ENCODE measurements at regions of chr10 and their contacts with region 1.

Region 1: DNA sequence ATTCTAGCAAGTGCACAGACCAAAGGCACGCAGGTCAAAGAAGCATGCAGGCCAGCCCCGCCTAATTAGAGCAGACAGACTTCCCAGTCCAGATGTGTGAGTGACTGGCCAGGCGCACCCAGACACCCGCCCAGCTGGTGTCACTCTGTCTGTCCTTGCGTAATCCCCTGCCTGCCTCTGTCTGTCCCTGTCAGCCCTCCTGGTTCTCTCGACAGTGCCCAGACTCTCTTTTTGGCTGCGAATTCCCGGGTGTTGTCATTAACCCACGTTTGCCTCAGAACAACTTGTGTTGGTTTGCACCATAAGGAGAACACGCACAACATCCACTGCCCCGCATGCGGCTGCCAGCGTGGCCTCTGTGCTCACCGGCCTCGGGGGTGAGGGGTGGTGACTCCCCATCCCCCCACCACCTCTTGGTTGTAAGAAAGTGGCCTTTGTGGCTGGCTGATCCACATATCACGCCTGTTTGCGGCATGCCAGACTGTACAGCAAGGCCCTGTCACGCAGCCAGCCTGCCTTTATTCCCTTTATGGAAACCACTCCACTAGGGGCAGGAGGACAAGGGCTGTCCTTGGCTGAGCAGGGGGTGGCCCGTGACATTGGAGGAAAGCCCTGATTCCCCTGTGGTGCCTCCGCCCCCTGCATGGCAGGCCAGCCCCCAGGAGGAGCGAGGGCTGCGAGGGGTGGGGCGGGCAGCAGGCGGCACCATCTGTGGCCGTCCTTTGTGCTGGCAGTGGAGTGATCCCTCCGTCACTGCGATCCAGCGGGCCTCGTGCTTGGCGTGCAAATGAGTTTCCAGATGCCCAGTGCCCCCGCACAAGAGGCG is 72.8 kb upstream of the PPIF start:
- DNase-seq: peak; percentile 89
- ATAC-seq: peak; percentile 83

Region 2: DNA sequence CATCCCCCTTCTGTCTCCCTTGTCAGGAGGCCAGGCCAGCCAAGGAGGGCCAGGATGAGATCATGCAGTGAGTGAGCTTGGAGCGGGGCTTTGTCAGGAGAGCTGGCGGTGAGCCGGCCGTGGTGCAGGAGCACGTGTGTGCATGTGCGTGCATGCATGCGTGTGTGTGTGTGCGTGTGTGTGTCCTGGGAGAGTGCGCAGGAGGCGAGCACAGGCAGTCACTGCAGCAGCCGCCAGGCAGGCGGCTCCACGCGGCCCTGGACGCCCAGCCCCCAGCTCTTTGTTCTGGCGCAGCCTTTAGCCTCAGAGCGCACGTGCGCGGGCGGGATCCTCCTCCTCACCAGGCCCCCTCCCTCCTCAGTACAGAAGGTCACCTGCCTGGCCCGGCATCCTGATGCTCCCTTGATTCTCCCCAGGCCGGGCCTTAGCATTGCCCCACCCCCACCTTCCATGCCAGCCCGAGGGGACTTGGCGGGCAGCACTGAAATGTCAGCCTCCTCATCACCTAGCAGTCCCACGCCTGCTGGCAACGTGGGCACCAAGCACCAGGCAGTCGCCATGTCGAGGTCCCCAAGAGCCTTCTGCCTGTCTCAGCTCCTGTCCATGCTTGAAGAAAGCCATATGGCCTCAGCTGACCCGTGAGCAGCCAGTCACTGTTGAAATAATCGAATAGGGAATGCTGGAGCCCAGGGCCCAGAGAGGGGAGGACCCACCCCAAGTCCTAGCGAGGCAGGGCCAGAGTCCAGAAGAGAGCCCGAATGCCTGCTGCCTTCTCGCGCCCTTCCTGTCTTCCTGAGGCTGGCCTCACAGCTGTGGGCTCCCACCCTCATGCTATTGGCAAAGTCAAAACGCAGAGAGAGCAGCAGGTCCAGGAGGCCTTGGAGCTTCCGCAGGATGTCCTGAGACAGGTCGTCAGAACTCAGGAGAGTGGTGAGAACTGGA is 53.1 kb before region 1 on chr10:
- intact Hi-C with region 1: loop called (anchors 10 kb)
- DNase-seq: peak; percentile 92
- ATAC-seq: peak; percentile 68

Region 3: GRCh38 chr10:79507440-79508167 is 233.1 kb after region 1 on chr10:
- intact Hi-C with region 1: no loop called
- DNase-seq: no peak
- ATAC-seq: no peak